Endothelial cell of umbilical vein (primary cell): ENCODE measurements at regions of chr3 and their contacts with region 1.

Region 1: DNA sequence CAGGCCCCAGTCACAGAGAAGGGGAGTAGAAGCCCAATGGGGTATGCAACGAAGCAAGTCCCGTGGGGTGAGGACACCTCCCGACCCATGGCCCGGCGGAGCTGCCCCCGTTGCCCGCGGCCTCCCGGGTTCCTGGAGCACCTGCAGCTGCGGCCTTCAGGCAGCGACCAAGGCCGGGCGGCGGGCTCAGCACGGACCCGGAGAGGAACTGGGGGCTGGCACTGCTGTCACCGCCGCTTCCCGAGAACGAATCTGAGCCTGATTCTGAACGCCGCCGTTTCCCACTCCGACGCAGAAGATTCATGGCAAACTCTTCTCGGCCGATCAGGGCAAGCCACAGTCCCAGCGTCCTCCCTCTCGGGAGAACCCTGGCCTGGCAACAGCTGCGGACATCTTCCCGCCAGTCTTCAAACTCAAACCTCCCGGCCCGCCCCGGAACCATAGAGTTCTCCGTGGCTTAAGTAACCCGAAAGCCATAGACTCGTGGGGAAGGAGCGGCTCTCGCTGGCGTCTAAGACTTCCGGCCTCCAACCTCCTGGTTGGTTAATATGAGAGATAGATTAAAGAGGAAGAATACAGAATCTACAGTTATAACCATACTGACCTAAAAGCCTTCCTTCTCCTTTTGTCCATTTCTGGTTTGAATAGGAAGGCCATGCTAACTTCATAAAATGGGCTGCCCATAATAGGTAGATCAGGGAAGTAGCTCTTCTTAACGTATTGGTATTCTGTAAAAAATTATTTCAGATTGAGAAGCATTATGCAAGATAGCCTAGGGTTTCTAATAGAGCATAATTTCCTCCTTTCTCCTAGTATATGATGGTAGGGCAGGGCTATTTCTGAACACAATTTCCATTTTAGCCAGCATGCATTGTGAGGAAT is at the start of gene POLQ:
- DNase-seq: peak; percentile 91
- H3K4me3 ChIP-seq: peak within 1 kb of the TSS; percentile 65 to 93 (median 67)
- H3K27ac ChIP-seq: peak within 1 kb of the TSS; percentile 17
- H3K4me1 ChIP-seq: peaks cover 12% of the 10 kb centered on the region
- H3K27me3 ChIP-seq: no peaks in the 10 kb centered on the region
- CTCF ChIP-seq: no peak
- POLR2A ChIP-seq: peak; percentile 60
- total RNA-seq, gene POLQ: 9.5 and 10.8 TPM in 2 replicates

Region 2: DNA sequence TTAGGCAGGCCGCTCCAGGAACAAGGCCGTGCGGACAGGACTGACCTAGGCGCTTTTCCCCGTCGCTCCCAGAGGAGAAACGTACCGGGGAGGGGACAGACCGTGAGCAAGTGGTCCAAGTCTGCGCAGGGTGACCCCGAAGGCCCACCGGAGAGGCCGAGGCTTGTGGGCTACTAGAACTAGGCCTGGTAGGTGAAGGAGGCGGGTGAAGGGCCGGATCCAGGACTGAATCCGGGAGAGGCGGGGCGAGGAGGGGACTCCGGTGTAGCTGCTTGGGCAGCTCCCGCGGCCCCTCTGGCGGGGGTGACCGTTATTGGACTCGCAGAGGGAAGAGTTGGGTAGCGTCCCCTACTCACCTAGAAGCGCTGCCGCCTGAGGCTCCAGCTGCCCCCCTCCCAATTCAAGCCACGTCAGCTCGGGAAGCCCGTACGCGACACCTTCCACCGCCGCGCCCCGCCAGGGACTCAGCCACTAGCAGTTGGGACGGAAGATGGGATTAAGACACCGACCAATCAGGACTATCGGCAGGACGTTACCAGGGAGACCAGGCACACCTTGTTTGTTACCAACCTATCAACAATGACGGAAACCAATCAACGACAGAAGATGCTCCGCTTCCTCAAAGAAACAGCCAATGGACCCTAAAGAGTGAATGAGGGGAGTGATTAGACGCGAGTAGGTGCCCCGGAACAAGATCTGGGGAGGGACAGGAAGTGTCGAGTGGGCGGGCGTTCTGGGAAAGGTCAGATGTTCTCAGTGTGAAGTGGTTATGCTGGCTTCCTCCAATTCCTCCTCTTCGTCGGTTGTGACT is 203.7 kb after region 1 on chr3 and contains the start of gene GOLGB1:
- CTCF ChIA-PET with region 1: no interaction called
- POLR2A ChIA-PET with region 1: no interaction called
- dilution Hi-C with region 1: no loop called
- intact Hi-C with region 1: loop called (anchors 1 kb)
- DNase-seq: peak; percentile 99
- H3K4me3 ChIP-seq: peak within 1 kb of the TSS; percentile 49 to 84 (median 64)
- H3K27ac ChIP-seq: peak within 1 kb of the TSS; percentile 74
- H3K4me1 ChIP-seq: peaks cover 20% of the 10 kb centered on the region
- H3K27me3 ChIP-seq: peaks cover 5 to 17% of the 10 kb centered on the region in 2 experiments
- CTCF ChIP-seq: no peak
- POLR2A ChIP-seq: peak; percentile 96
- total RNA-seq, gene GOLGB1: 32.2 and 42.7 TPM in 2 replicates

Region 3: GRCh38 chr3:122092460-122093165 is 546.8 kb after region 1 on chr3:
- CTCF ChIA-PET with region 1: interaction called, 5 read pairs
- POLR2A ChIA-PET with region 1: no interaction called
- dilution Hi-C with region 1: no loop called
- intact Hi-C with region 1: loop called (anchors 1 kb)
- DNase-seq: peak; percentile 34
- H3K4me3 ChIP-seq: no peak overlapping the region
- H3K27ac ChIP-seq: no peak overlapping the region
- H3K4me1 ChIP-seq: peaks cover 6% of the 10 kb centered on the region
- H3K27me3 ChIP-seq: peaks cover 4% of the 10 kb centered on the region in 2 experiments
- CTCF ChIP-seq: peak; percentile 58 to 68
- POLR2A ChIP-seq: no peak

Region 4: GRCh38 chr3:122305818-122306621 is 760.2 kb after region 1 on chr3:
- CTCF ChIA-PET with region 1: interaction called, 34 read pairs
- POLR2A ChIA-PET with region 1: no interaction called
- dilution Hi-C with region 1: no loop called
- intact Hi-C with region 1: no loop called
- DNase-seq: no peak
- H3K4me3 ChIP-seq: no peak overlapping the region
- H3K27ac ChIP-seq: no peak overlapping the region
- H3K4me1 ChIP-seq: no peaks in the 10 kb centered on the region
- H3K27me3 ChIP-seq: peaks cover 3 to 4% of the 10 kb centered on the region in 2 experiments
- CTCF ChIP-seq: no peak
- POLR2A ChIP-seq: no peak

Region 5: GRCh38 chr3:122392868-122393844 is 847.3 kb after region 1 on chr3:
- CTCF ChIA-PET with region 1: interaction called, 10 read pairs
- POLR2A ChIA-PET with region 1: no interaction called
- dilution Hi-C with region 1: no loop called
- intact Hi-C with region 1: no loop called
- DNase-seq: peak; percentile 56
- H3K4me3 ChIP-seq: no peak overlapping the region
- H3K27ac ChIP-seq: no peak overlapping the region
- H3K4me1 ChIP-seq: peaks cover 4% of the 10 kb centered on the region
- H3K27me3 ChIP-seq: no peaks in the 10 kb centered on the region
- CTCF ChIP-seq: peak; percentile 56 to 61
- POLR2A ChIP-seq: no peak

Region 6: GRCh38 chr3:123028233-123028828 is 1482.5 kb after region 1 on chr3:
- CTCF ChIA-PET with region 1: interaction called, 4 read pairs
- POLR2A ChIA-PET with region 1: no interaction called
- dilution Hi-C with region 1: no loop called
- intact Hi-C with region 1: loop called (anchors 2 kb)
- DNase-seq: peak; percentile 67
- H3K4me3 ChIP-seq: peak overlapping the region; percentile 18 to 20 (median 20)
- H3K27ac ChIP-seq: no peak overlapping the region
- H3K4me1 ChIP-seq: peaks cover 17% of the 10 kb centered on the region
- H3K27me3 ChIP-seq: peaks cover 72 to 90% of the 10 kb centered on the region in 2 experiments
- CTCF ChIP-seq: peak; percentile 32 to 40
- POLR2A ChIP-seq: no peak